Vagina (tissue), 2 donors: ENCODE measurements at regions of chr20 and their contacts with region 1.

Region 1: GRCh38 chr20:11274141-11274594 is 600.4 kb upstream of the JAG1 start:
- DNase-seq: no peak
- H3K4me3 ChIP-seq: no peak overlapping the region
- H3K27ac ChIP-seq: no peak overlapping the region
- H3K4me1 ChIP-seq: peaks cover 12% of the 10 kb centered on the region
- H3K27me3 ChIP-seq: no peaks in the 10 kb centered on the region
- CTCF ChIP-seq: peak in 2 of 3 experiments; percentile 26 to 35
- POLR2A ChIP-seq: no peak

Region 2: GRCh38 chr20:10469599-10469998 is 804.6 kb before region 1 on chr20:
- intact Hi-C with region 1: loop called (anchors 10 kb)
- DNase-seq: no peak
- H3K4me3 ChIP-seq: no peak overlapping the region
- H3K27ac ChIP-seq: peak overlapping the region; percentile 13
- H3K4me1 ChIP-seq: peaks cover 30% of the 10 kb centered on the region
- H3K27me3 ChIP-seq: no peaks in the 10 kb centered on the region
- CTCF ChIP-seq: peak; percentile 52 to 74 (median 52)
- POLR2A ChIP-seq: no peak

Region 3: GRCh38 chr20:10553326-10553984 is 720.7 kb before region 1 on chr20:
- intact Hi-C with region 1: loop called (anchors 10 kb)
- DNase-seq: no peak
- H3K4me3 ChIP-seq: no peak overlapping the region
- H3K27ac ChIP-seq: no peak overlapping the region
- H3K4me1 ChIP-seq: peaks cover 39% of the 10 kb centered on the region
- H3K27me3 ChIP-seq: no peaks in the 10 kb centered on the region
- CTCF ChIP-seq: peak; percentile 22 to 86 (median 73)
- POLR2A ChIP-seq: no peak

Region 4: GRCh38 chr20:10647465-10647864 is 626.7 kb before region 1 on chr20:
- intact Hi-C with region 1: no loop called
- DNase-seq: no peak
- H3K4me3 ChIP-seq: no peak overlapping the region
- H3K27ac ChIP-seq: peak overlapping the region; percentile 61
- H3K4me1 ChIP-seq: peaks cover 42% of the 10 kb centered on the region
- H3K27me3 ChIP-seq: no peaks in the 10 kb centered on the region
- CTCF ChIP-seq: no peak
- POLR2A ChIP-seq: no peak

Region 5: DNA sequence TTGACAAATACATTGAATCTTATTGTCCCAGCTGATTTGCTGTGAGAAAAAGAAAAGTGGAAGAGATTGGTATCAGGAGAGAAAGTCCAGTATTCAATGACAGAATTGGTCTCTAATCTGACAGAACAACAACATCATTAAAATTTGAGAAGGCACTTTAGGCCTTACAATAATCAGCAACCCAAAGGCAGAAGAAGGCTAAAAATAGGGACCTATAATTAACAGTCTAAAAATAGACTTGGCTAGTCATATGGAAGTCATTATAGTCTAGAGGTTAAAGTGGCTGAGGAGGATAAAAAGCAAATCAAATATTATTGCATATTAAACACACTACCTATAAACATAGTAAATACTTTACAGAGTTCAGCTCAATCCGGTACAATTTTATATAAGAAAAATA is 206.8 kb before region 1 on chr20:
- intact Hi-C with region 1: no loop called
- DNase-seq: no peak
- H3K4me3 ChIP-seq: no peak overlapping the region
- H3K27ac ChIP-seq: no peak overlapping the region
- H3K4me1 ChIP-seq: no peaks in the 10 kb centered on the region
- H3K27me3 ChIP-seq: no peaks in the 10 kb centered on the region
- CTCF ChIP-seq: no peak
- POLR2A ChIP-seq: no peak

Region 6: GRCh38 chr20:11569163-11569562 is 295.0 kb after region 1 on chr20:
- intact Hi-C with region 1: no loop called
- DNase-seq: no peak
- H3K4me3 ChIP-seq: no peak overlapping the region
- H3K27ac ChIP-seq: no peak overlapping the region
- H3K4me1 ChIP-seq: no peaks in the 10 kb centered on the region
- H3K27me3 ChIP-seq: no peaks in the 10 kb centered on the region
- CTCF ChIP-seq: no peak
- POLR2A ChIP-seq: no peak